Activated B cell treated with CpG ODN at 0.5 μM for 24 hours (primary cell): ENCODE measurements at regions of chr15 and their contacts with region 1.

Region 1: GRCh38 chr15:34616613-34617012 is 33.2 kb upstream of the GOLGA8B start:
- DNase-seq: no peak
- ATAC-seq: no peak
- H3K4me3 Mint-ChIP-seq: no peak overlapping the region
- H3K27ac Mint-ChIP-seq: no peak overlapping the region
- H3K4me1 Mint-ChIP-seq: no peaks in the 10 kb centered on the region
- H3K27me3 Mint-ChIP-seq: peaks cover 25% of the 10 kb centered on the region
- CTCF ChIP-seq: no peak

Region 2: DNA sequence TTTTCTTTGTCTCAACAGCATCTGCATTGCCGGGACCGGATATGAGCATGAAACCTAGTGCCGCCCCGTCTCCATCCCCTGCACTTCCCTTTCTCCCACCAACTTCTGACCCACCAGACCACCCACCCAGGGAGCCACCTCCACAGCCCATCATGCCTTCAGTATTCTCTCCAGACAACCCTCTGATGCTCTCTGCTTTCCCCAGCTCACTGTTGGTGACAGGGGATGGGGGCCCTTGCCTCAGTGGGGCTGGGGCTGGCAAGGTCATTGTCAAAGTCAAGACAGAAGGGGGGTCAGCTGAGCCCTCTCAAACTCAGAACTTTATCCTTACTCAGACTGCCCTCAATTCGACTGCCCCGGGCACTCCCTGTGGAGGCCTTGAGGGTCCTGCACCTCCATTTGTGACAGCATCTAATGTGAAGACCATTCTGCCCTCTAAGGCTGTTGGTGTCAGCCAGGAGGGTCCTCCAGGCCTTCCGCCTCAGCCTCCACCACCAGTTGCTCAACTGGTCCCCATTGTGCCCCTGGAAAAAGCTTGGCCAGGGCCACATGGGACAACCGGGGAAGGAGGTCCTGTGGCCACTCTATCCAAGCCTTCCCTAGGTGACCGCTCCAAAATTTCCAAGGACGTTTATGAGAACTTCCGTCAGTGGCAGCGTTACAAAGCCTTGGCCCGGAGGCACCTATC is 268.5 kb before region 1 on chr15:
- CTCF ChIA-PET with region 1: no interaction called
- POLR2A ChIA-PET with region 1: no interaction called
- intact Hi-C with region 1: no loop called
- DNase-seq: no peak
- ATAC-seq: no peak
- H3K4me3 Mint-ChIP-seq: no peak overlapping the region
- H3K27ac Mint-ChIP-seq: no peak overlapping the region
- H3K4me1 Mint-ChIP-seq: no peaks in the 10 kb centered on the region
- H3K27me3 Mint-ChIP-seq: no peaks in the 10 kb centered on the region
- CTCF ChIP-seq: no peak

Region 3: DNA sequence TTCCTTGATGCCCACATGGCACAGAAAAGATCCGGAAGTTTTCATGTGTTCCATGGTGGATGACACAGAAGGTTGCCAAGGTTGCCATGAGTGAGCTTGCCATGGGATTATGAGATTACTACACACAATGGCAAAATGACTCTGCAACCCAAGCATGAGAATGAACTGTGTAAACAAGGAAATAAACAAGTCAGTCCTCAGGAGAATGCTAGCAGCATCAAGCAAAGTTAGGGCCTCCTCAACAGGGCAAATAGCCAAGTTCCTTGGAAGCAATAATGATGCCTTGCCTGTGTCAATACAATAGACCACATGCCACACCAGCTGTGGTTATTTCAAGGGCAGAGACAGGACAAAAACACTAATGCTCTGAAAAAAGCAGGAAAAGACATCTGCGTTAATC is 311.1 kb after region 1 on chr15:
- CTCF ChIA-PET with region 1: no interaction called
- POLR2A ChIA-PET with region 1: no interaction called
- intact Hi-C with region 1: loop called (anchors 10 kb)
- DNase-seq: no peak
- ATAC-seq: no peak
- H3K4me3 Mint-ChIP-seq: no peak overlapping the region
- H3K27ac Mint-ChIP-seq: no peak overlapping the region
- H3K4me1 Mint-ChIP-seq: no peaks in the 10 kb centered on the region
- H3K27me3 Mint-ChIP-seq: no peaks in the 10 kb centered on the region
- CTCF ChIP-seq: no peak